ENCODE measurements at regions of chr7 and their contacts with region 1.

Region 1: DNA sequence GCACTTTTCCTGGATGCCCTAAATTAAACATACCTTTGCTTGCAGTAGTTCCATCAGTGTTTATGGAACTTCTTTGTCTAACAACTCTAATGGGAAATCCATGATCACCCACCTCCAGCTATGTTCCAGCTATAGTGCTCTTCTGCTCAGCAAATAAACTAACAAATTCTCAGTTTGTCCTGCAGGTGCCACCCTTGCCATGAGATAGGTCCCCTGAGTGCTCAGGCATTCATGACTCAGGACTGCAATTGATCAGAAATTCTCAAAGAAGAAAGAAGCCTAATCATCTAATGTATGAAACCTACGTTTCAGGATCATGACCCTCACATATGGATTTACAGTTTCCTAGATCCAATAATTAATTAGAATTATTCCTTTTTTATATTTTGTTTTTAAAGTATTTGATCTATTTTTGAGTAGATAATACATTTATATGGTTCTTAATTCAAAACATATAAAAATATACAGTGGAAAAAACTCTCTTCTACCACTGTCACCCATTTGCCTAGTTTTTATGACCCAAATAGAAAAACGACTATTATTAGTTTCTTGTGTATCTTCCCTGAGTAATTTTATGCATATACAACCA is 48.7 kb upstream of the DYNC1I1 start:
- DNase-seq: peak; percentile 31
- CTCF ChIP-seq: peak; percentile 35

Region 2: GRCh38 chr7:95501261-95501832 is 222.3 kb before region 1 on chr7:
- CTCF ChIA-PET with region 1: no interaction called
- POLR2A ChIA-PET with region 1: no interaction called
- DNase-seq: peak; percentile 25
- CTCF ChIP-seq: no peak

Region 3: DNA sequence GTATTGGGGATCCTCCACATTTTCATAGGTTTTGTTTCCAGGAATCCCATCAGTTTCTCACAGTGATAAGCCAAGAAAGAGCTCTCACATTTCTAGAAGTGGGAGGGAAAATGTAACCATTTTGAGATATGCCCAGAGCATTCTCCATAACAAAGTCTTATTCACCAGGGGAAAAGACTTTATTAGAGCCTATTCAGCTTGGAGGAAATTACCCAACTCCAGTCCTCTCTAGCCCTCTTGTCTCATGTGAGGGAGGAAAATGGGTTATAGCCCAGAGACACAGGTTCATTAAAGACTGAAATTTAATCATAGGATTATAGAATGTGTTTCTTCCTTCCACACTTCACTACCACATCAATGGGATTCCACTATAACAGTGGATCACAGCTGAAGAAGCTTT is 13.0 kb before region 1 on chr7:
- CTCF ChIA-PET with region 1: no interaction called
- POLR2A ChIA-PET with region 1: no interaction called
- DNase-seq: no peak
- CTCF ChIP-seq: no peak

Region 4: DNA sequence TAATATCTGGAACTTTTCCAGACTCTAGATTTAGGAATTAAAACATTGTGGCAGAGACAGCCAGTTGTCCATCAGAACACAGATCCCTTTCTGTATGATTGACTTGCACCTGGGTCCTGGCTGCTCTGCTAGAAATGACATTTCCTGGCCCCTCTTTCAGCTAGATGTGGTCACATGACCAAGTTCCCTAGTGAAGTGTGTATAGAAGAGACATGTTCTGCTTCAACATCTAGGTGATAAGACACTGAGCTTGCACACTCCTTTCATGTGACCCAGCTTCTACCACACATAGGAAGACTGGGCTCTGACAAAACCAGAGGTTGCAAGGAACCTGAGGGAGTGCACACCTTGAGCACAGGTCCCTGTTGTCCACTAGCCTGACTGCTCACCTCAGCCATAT is 25.8 kb after region 1 on chr7:
- CTCF ChIA-PET with region 1: no interaction called
- POLR2A ChIA-PET with region 1: no interaction called
- DNase-seq: no peak
- CTCF ChIP-seq: no peak

Region 5: GRCh38 chr7:95871078-95871782 is 147.5 kb after region 1 on chr7:
- CTCF ChIA-PET with region 1: interaction called, 42 read pairs
- POLR2A ChIA-PET with region 1: no interaction called
- DNase-seq: peak; percentile 49
- CTCF ChIP-seq: peak; percentile 55

Region 6: DNA sequence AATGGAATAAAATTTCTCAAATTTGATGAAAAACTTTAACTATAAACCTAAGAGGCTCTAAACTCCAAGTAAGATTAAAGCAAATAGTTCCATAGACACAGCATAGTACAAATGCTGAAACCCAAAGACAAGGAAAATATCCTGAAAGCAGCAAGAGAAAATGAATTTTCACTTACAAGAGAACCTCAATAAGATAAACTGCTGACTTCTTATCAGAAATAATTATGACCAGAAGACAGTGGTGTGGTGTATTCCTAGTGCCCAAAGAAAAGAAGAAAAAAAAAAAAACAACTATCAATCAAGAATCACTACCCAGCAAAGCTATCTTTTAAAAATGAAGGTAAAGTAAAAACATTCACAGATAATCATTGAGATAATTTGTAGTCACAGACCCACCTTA is 155.0 kb after region 1 on chr7:
- CTCF ChIA-PET with region 1: interaction called, 11 read pairs
- POLR2A ChIA-PET with region 1: no interaction called
- DNase-seq: no peak
- CTCF ChIP-seq: no peak